ENCODE measurements at regions of chr19 and their contacts with region 1.

Region 1: GRCh38 chr19:48899781-48900476 is at the start of gene NUCB1:
- DNase-seq: peak; percentile 100
- ATAC-seq: peak; percentile 97
- H3K4me3 ChIP-seq: peak within 1 kb of the TSS; percentile 90
- H3K27ac ChIP-seq: peak within 1 kb of the TSS; percentile 93
- H3K4me1 ChIP-seq: peaks cover 6% of the 10 kb centered on the region
- H3K27me3 ChIP-seq: no peaks in the 10 kb centered on the region
- total RNA-seq, gene NUCB1: 275 to 327 (median 307) TPM

Region 2: DNA sequence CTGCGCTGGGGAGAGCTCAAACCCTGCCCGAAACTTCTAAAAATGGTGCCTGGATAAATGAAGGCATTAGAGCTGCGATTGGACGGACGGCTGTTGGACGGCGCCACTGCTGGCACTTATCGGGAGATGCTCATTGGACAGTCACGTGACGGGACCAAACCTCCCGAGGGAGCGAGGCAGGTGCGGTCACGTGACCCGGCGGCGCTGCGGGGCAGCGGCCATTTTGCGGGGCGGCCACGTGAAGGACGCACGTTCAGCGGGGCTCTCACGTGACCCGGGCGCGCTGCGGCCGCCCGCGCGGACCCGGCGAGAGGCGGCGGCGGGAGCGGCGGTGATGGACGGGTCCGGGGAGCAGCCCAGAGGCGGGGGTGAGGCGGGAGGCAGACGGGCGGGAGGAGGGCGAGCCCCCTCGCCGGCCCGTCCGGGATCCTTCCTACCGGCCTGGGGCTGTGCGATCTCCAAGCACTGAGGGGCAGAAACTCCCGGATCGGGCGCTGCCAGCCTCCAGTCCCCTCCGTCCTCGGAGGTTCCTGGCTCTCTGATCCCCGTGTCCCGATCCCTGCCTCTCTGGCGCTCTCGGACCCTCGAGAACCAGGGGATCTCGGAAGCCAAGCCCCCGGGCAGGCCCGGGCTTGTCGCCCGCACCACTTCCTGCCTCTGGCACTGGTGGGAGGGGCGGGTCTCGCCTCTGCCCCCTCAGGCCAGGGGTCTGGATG is 54.8 kb after region 1 on chr19 and contains the start of gene BAX:
- intact Hi-C with region 1: loop called in 2 of 4 experiments (anchors 5 to 10 kb)
- DNase-seq: peak; percentile 97 to 99 (median 99)
- ATAC-seq: peak; percentile 95 to 96
- H3K4me3 ChIP-seq: peak within 1 kb of the TSS; percentile 81
- H3K27ac ChIP-seq: peak within 1 kb of the TSS; percentile 82
- H3K4me1 ChIP-seq: no peaks in the 10 kb centered on the region
- H3K27me3 ChIP-seq: no peaks in the 10 kb centered on the region
- total RNA-seq, gene BAX: 23.8 to 34.6 (median 30.4) TPM

Region 3: DNA sequence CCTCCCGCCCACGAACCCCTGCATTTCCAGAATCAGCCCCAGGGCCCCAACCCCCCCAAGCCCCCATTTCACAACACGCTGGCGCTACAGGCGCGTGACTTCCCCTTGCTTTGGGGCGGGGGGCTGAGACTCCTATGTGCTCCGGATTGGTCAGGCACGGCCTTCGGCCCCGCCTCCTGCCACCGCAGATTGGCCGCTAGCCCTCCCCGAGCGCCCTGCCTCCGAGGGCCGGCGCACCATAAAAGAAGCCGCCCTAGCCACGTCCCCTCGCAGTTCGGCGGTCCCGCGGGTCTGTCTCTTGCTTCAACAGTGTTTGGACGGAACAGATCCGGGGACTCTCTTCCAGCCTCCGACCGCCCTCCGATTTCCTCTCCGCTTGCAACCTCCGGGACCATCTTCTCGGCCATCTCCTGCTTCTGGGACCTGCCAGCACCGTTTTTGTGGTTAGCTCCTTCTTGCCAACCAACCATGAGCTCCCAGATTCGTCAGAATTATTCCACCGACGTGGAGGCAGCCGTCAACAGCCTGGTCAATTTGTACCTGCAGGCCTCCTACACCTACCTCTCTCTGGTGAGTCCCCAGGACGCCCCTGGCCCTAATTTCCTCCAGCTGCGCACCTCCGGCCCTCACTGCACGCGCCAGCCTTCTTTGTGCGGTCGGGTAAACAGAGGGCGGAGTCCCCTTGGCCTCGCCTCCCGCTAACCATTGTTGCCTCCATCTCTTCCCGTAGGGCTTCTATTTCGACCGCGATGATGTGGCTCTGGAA is 65.3 kb after region 1 on chr19 and contains the start of gene FTL:
- intact Hi-C with region 1: loop called in 1 of 4 experiments (anchors 10 kb)
- DNase-seq: peak; percentile 98 to 99 (median 99)
- ATAC-seq: peak; percentile 87 to 90
- H3K4me3 ChIP-seq: peak within 1 kb of the TSS; percentile 69
- H3K27ac ChIP-seq: peak within 1 kb of the TSS; percentile 86
- H3K4me1 ChIP-seq: peaks cover 11% of the 10 kb centered on the region
- H3K27me3 ChIP-seq: no peaks in the 10 kb centered on the region
- total RNA-seq, gene FTL: 1,459 to 1,840 (median 1,541) TPM

Region 4: GRCh38 chr19:49056010-49056901 is 156.3 kb after region 1 on chr19:
- intact Hi-C with region 1: no loop called
- DNase-seq: peak; percentile 61 to 84 (median 84)
- ATAC-seq: peak; percentile 84 to 90
- H3K4me3 ChIP-seq: peak overlapping the region; percentile 49
- H3K27ac ChIP-seq: no peak overlapping the region
- H3K4me1 ChIP-seq: no peaks in the 10 kb centered on the region
- H3K27me3 ChIP-seq: no peaks in the 10 kb centered on the region